GM13977 (cell line): ENCODE measurements at regions of chr17 and their contacts with region 1.

Region 1: DNA sequence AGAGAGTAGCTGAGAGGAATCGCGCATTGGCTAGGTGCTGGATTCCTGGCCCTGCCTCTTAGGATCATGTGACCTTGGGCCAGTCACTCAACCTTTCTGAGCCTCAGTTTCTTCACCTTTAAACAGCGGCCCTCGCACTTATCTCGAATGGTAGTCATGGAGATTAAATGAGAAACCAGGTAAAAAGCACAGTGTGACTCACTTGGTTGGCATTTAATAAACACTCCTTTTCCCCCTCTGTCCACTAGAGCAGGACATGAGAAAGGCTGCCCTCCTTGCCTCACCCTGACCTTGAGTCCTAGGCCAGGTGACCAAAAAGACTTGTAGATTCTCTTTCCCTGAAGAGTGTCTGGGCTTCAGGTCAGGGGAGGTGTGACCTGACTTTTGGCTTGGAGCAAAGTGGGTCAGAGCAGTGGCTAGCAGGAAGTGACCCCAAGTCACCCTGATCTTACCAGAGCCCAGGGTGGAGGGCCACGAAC is 65.0 kb downstream of the PIPOX start:
- DNase-seq: no peak
- CTCF ChIP-seq: no peak

Region 2: DNA sequence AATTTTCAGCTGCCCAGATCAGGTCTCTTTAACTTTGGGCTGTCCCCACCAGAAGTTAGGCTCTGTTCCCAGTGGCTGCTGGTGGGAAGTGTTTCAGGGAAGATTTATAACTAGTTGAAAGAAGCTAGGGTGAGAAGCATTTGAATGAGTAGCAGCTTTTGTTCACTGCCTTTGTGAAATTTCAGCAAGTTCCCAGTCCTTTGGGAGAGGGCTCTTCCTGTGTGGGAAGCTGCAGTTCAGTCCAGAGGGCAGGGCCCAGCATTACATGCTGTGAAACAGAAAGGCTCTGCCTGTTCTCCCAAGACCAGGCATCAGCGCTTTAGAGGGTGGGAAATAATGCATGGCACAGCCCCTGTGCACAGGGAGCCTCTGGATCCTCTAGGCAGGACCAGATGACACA is 414.1 kb before region 1 on chr17:
- in situ Hi-C with region 1: no loop called
- DNase-seq: no peak
- CTCF ChIP-seq: no peak

Region 3: DNA sequence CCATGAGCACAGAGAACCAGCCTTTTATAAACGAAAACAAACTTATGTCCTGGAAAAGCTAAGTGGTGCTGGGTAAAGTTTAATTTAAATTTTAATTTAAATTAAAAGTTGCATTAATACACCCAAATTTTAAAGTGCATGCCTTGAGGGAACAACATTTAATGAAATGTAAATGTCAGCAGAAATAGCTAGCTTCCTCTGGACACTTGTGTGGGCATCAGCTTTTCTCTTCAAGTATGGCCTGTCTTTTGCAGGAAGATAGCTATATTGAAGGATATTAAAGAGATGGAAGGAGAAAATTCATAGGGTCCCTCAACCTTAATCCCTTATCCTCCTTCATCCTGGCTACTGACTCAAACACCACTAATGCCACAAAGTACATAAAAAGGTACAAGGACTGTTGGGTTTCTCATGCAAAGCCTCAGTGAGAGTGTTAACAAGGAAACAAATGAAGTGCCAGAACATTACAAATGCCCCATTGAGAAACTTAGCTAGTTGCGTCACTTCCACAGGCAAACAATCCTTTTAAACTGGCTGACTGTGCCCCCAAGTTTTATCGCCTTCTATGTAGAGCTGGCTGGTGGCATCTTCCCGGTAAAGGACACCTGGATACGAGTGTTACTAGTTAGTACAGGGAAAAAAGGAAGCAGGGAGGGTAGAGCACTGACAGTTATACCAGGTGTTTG is 170.8 kb before region 1 on chr17:
- in situ Hi-C with region 1: no loop called
- DNase-seq: no peak
- CTCF ChIP-seq: no peak

Region 4: GRCh38 chr17:28973425-28973824 is 134.6 kb before region 1 on chr17:
- in situ Hi-C with region 1: loop called (anchors 10 kb)
- DNase-seq: no peak
- CTCF ChIP-seq: no peak